MCF 10A (cell line): ENCODE measurements at regions of chr6 and their contacts with region 1.

Region 1: DNA sequence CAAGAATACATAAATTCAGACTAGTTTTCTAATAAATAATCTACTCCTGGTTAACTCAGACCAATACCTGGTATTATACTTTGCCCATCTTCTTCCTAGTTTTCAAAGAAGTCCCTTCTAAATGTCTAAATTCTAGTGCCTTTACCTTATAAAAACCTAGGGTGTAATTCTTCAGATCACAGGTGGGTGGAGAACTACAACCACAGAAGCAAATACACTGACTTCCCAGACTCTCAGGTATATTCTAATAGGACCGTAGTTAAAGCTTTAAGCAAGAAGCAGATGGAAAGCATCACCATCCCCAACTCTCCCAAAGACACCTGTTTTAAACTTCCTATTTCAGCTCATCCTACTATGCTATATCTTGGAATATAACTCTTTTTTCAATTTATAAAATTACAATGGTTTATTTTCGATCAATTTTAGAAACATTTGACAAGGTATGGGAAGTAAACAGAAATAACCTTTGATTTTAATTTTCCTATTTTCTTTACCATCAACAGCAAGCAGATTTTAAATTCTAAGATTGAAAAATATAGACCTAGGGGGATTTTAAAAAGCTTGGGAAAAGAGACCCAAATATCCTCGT is 15.8 kb downstream of the MAN1A1 start:
- DNase-seq: peak; percentile 44
- H3K4me3 Mint-ChIP-seq: no peak overlapping the region
- H3K27ac Mint-ChIP-seq: no peak overlapping the region
- H3K4me1 Mint-ChIP-seq: no peaks in the 10 kb centered on the region
- H3K27me3 Mint-ChIP-seq: no peaks in the 10 kb centered on the region
- CTCF ChIP-seq: peak; percentile 45

Region 2: GRCh38 chr6:119129148-119129967 is 204.4 kb before region 1 on chr6:
- CTCF ChIA-PET with region 1: interaction called, 12 read pairs
- POLR2A ChIA-PET with region 1: no interaction called
- intact Hi-C with region 1: no loop called
- DNase-seq: peak; percentile 81
- H3K4me3 Mint-ChIP-seq: no peak overlapping the region
- H3K27ac Mint-ChIP-seq: peak overlapping the region; percentile 66
- H3K4me1 Mint-ChIP-seq: peaks cover 21% of the 10 kb centered on the region
- H3K27me3 Mint-ChIP-seq: no peaks in the 10 kb centered on the region
- CTCF ChIP-seq: peak; percentile 72

Region 3: GRCh38 chr6:119322715-119323350 is 11.0 kb before region 1 on chr6:
- CTCF ChIA-PET with region 1: interaction called, 18 read pairs
- POLR2A ChIA-PET with region 1: interaction called, 3 read pairs
- intact Hi-C with region 1: no loop called
- DNase-seq: no peak
- H3K4me3 Mint-ChIP-seq: no peak overlapping the region
- H3K27ac Mint-ChIP-seq: no peak overlapping the region
- H3K4me1 Mint-ChIP-seq: peaks cover 10% of the 10 kb centered on the region
- H3K27me3 Mint-ChIP-seq: no peaks in the 10 kb centered on the region
- CTCF ChIP-seq: no peak

Region 4: GRCh38 chr6:119627908-119628669 is 294.3 kb after region 1 on chr6:
- CTCF ChIA-PET with region 1: interaction called, 16 read pairs
- POLR2A ChIA-PET with region 1: no interaction called
- intact Hi-C with region 1: loop called (anchors 1 kb)
- DNase-seq: peak; percentile 45
- H3K4me3 Mint-ChIP-seq: peak overlapping the region; percentile 11
- H3K27ac Mint-ChIP-seq: no peak overlapping the region
- H3K4me1 Mint-ChIP-seq: peaks cover 13% of the 10 kb centered on the region
- H3K27me3 Mint-ChIP-seq: no peaks in the 10 kb centered on the region
- CTCF ChIP-seq: no peak

Region 5: GRCh38 chr6:119742188-119742803 is 408.5 kb after region 1 on chr6:
- CTCF ChIA-PET with region 1: interaction called, 15 read pairs
- POLR2A ChIA-PET with region 1: interaction called, 3 read pairs
- intact Hi-C with region 1: loop called (anchors 1 kb)
- DNase-seq: peak; percentile 63
- H3K4me3 Mint-ChIP-seq: no peak overlapping the region
- H3K27ac Mint-ChIP-seq: no peak overlapping the region
- H3K4me1 Mint-ChIP-seq: no peaks in the 10 kb centered on the region
- H3K27me3 Mint-ChIP-seq: no peaks in the 10 kb centered on the region
- CTCF ChIP-seq: peak; percentile 80

Region 6: DNA sequence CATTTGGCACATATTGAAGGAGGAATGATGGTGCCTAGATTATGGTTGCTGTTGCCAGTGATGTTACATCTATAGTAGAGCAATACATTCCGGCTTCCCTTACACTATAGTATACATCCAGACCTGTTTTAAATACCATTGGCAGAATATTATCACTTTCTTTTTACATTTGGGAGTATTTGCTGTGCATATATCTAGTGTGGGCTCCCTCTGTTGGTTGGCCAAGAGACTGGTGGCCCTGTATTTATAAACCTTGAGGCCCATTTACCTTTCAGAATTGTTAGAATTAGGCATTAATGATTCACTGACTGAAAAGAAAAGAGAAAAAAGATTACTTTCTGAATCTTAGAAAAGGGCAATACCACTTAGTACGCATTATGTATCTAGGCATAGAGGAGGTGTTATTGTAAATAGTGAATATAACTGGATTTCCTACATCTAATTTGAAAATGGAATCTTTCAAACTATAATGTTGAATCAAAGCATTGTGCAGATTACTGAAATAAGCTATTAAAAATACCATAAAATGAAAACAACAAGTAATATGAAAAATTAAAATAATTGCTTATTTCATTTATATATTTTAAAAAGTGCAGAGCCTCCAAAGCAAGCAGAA is 644.6 kb after region 1 on chr6:
- CTCF ChIA-PET with region 1: interaction called, 19 read pairs
- POLR2A ChIA-PET with region 1: no interaction called
- intact Hi-C with region 1: loop called (anchors 1 kb)
- DNase-seq: peak; percentile 33
- H3K4me3 Mint-ChIP-seq: no peak overlapping the region
- H3K27ac Mint-ChIP-seq: no peak overlapping the region
- H3K4me1 Mint-ChIP-seq: no peaks in the 10 kb centered on the region
- H3K27me3 Mint-ChIP-seq: no peaks in the 10 kb centered on the region
- CTCF ChIP-seq: peak; percentile 50

Region 7: GRCh38 chr6:120077489-120077888 is 743.7 kb after region 1 on chr6:
- CTCF ChIA-PET with region 1: interaction called, 11 read pairs
- POLR2A ChIA-PET with region 1: no interaction called
- intact Hi-C with region 1: loop called (anchors 5 kb)
- DNase-seq: peak; percentile 55
- H3K4me3 Mint-ChIP-seq: no peak overlapping the region
- H3K27ac Mint-ChIP-seq: no peak overlapping the region
- H3K4me1 Mint-ChIP-seq: peaks cover 5% of the 10 kb centered on the region
- H3K27me3 Mint-ChIP-seq: no peaks in the 10 kb centered on the region
- CTCF ChIP-seq: peak; percentile 30